ENCODE measurements at regions of chr7 and their contacts with region 1.

Region 1: GRCh38 chr7:99558306-99559174 is at the start of gene ZNF655:
- DNase-seq: peak; percentile 93
- ATAC-seq: peak; percentile 86
- H3K4me3 Mint-ChIP-seq: peak within 1 kb of the TSS; percentile 100
- H3K27ac Mint-ChIP-seq: peak within 1 kb of the TSS; percentile 100
- H3K4me1 Mint-ChIP-seq: peaks cover 39% of the 10 kb centered on the region
- H3K27me3 Mint-ChIP-seq: no peaks in the 10 kb centered on the region
- total RNA-seq, gene ZNF655: 133 to 134 TPM

Region 2: GRCh38 chr7:99588868-99589267 is 30.3 kb after region 1 on chr7:
- POLR2A ChIA-PET with region 1: no interaction called
- DNase-seq: no peak
- ATAC-seq: peak; percentile 41
- H3K4me3 Mint-ChIP-seq: no peak overlapping the region
- H3K27ac Mint-ChIP-seq: no peak overlapping the region
- H3K4me1 Mint-ChIP-seq: no peaks in the 10 kb centered on the region
- H3K27me3 Mint-ChIP-seq: no peaks in the 10 kb centered on the region

Region 3: GRCh38 chr7:99616359-99617191 is 58.0 kb after region 1 on chr7 and contains the start of gene ZSCAN25:
- POLR2A ChIA-PET with region 1: interaction called, 32 read pairs
- DNase-seq: peak; percentile 84
- ATAC-seq: peak; percentile 93
- H3K4me3 Mint-ChIP-seq: peak within 1 kb of the TSS; percentile 93
- H3K27ac Mint-ChIP-seq: peak within 1 kb of the TSS; percentile 97
- H3K4me1 Mint-ChIP-seq: peaks cover 39% of the 10 kb centered on the region
- H3K27me3 Mint-ChIP-seq: no peaks in the 10 kb centered on the region
- total RNA-seq, gene ZSCAN25: 35.5 to 42.5 TPM

Region 4: GRCh38 chr7:99624484-99624883 is 65.9 kb after region 1 on chr7:
- POLR2A ChIA-PET with region 1: interaction called, 13 read pairs
- DNase-seq: peak; percentile 82
- ATAC-seq: peak; percentile 91
- H3K4me3 Mint-ChIP-seq: peak overlapping the region; percentile 86
- H3K27ac Mint-ChIP-seq: peak overlapping the region; percentile 99
- H3K4me1 Mint-ChIP-seq: peaks cover 51% of the 10 kb centered on the region
- H3K27me3 Mint-ChIP-seq: no peaks in the 10 kb centered on the region

Measured in activated naive CD8-positive, alpha-beta T cell treated with anti-CD3 and anti-CD28 coated beads, Interleukin-2, amount 10 ng/mL, durations not matched to agents 7 days and 5 days (primary cell).